IMR-90 (cell line): ENCODE measurements at regions of chr14 and their contacts with region 1.

Region 1: DNA sequence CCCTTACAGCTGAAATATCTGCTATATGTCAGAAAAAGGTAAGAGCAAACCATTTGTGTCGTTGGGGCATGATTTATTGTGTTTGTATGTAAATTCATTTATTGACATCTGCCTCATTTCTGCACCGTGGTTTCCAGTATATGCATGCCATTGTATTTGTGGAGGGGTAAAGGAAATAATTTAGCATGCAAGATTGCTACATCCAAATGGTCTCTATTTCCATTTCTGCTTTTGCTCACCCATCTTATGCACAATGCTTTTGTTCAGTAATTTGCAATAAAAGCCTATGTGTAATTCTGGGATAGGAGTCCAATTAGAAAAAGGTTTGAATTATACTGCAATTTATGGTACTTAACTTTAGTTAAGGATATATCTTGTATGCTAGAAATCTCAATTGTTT is 101.8 kb downstream of the UNC79 start:
- DNase-seq: no peak
- ATAC-seq: no peak
- H3K4me3 ChIP-seq: no peak overlapping the region
- H3K27ac ChIP-seq: no peak overlapping the region
- H3K4me1 ChIP-seq: no peaks in the 10 kb centered on the region
- H3K27me3 ChIP-seq: no peaks in the 10 kb centered on the region
- CTCF ChIP-seq: no peak
- POLR2A ChIP-seq: no peak
- RAD21 ChIP-seq: no peak

Region 2: DNA sequence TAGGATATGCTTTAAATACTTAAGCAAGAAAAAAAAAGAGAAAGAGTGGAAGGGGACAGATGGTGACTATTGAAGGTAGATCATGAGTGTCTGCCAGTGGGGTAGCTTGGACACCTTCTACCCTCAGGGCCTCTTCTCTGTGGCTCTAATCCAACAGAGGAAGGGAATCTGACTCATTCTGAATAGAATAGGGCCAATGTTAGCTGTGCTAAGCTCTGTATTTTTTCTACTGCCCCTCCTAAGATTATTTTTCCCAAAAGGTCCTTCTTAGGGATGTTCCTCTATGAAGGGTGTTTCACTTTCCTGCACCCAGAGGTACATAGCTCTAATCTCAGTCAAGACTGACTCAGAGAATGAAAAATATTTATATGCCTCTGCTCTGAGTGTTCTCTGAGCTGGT is 76.2 kb before region 1 on chr14:
- CTCF ChIA-PET with region 1: no interaction called
- POLR2A ChIA-PET with region 1: no interaction called
- dilution Hi-C with region 1: no loop called
- in situ Hi-C with region 1: no loop called
- intact Hi-C with region 1: no loop called
- DNase-seq: no peak
- ATAC-seq: no peak
- H3K4me3 ChIP-seq: no peak overlapping the region
- H3K27ac ChIP-seq: no peak overlapping the region
- H3K4me1 ChIP-seq: no peaks in the 10 kb centered on the region
- H3K27me3 ChIP-seq: no peaks in the 10 kb centered on the region
- CTCF ChIP-seq: no peak
- POLR2A ChIP-seq: no peak
- RAD21 ChIP-seq: no peak

Region 3: DNA sequence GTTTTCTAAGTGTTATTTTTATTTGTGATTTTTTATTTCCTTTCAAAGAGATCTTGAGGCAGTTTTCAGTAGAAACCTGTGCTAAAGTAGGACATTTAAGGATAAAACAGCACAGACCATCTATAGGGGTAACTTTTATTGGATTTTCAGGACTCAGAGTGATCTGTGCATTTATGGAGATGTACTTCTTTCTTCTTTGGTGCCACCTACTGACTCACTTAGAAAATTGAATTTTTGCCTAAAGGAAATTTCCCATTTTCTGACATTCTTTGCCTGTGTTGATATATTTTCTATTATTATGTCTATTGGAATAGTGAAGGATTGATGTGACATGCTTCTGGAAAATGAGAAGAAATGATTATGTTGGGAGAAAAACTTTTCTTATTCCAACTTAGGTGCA is 11.2 kb after region 1 on chr14:
- CTCF ChIA-PET with region 1: no interaction called
- POLR2A ChIA-PET with region 1: no interaction called
- dilution Hi-C with region 1: no loop called
- in situ Hi-C with region 1: no loop called
- intact Hi-C with region 1: no loop called
- DNase-seq: peak; percentile 33
- ATAC-seq: peak; percentile 54
- H3K4me3 ChIP-seq: no peak overlapping the region
- H3K27ac ChIP-seq: no peak overlapping the region
- H3K4me1 ChIP-seq: no peaks in the 10 kb centered on the region
- H3K27me3 ChIP-seq: no peaks in the 10 kb centered on the region
- CTCF ChIP-seq: peak; percentile 53
- POLR2A ChIP-seq: no peak
- RAD21 ChIP-seq: peak; percentile 53

Region 4: DNA sequence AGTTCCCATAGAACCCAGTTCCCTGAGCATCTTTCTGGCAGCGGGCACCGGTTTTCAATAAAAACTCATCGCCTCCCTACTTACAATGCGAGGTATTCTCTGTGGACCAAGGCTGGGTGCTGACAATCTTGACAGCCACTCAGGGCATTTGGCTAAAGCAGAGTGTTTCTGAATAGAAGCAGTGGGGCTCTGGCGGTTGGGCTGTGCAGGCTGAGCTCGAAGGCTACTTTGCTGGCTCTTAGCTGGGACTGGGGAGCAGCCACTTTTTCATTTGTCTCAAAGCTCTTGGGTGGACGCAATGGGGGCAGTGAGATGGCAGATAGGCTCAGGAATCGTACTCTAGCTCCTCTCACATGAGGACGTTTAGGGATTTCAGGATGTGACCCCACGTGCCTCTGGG is 50.0 kb after region 1 on chr14:
- CTCF ChIA-PET with region 1: no interaction called
- POLR2A ChIA-PET with region 1: interaction called, 11 read pairs
- dilution Hi-C with region 1: no loop called
- in situ Hi-C with region 1: no loop called
- intact Hi-C with region 1: no loop called
- DNase-seq: no peak
- ATAC-seq: no peak
- H3K4me3 ChIP-seq: no peak overlapping the region
- H3K27ac ChIP-seq: no peak overlapping the region
- H3K4me1 ChIP-seq: no peaks in the 10 kb centered on the region
- H3K27me3 ChIP-seq: no peaks in the 10 kb centered on the region
- CTCF ChIP-seq: no peak
- POLR2A ChIP-seq: no peak
- RAD21 ChIP-seq: no peak